Activated CD4-positive, alpha-beta memory T cell treated with anti-CD3 and anti-CD28 coated beads, Interleukin-2, amount 10 ng/mL, durations not matched to agents 7 days and 5 days (primary cell): ENCODE measurements at regions of chr12 and their contacts with region 1.

Region 1: GRCh38 chr12:76144245-76144549 is 59.7 kb upstream of the NAP1L1 start:
- DNase-seq: no peak
- H3K4me3 Mint-ChIP-seq: no peak overlapping the region
- H3K27ac Mint-ChIP-seq: no peak overlapping the region
- H3K4me1 Mint-ChIP-seq: peaks cover 22% of the 10 kb centered on the region
- H3K27me3 Mint-ChIP-seq: no peaks in the 10 kb centered on the region

Region 2: DNA sequence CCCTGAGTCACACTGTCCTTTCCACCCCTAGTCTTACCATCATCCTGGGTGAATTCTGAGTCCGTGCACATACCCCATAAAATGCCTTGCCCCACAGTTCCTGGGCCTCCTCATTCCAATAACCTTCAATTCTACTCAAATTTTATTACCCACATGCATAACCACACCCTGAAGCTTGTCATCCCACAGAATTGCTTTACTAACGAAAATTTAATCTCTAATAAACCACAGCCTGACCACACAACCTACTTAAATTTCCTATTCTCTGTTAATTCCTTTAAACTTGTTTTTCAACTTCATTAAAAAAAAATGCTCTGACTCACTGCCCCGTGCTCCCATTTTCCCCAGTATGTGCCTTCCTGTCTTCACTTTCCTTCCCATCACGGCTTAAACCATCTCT is 318.5 kb before region 1 on chr12:
- CTCF ChIA-PET with region 1: no interaction called
- POLR2A ChIA-PET with region 1: no interaction called
- DNase-seq: no peak
- H3K4me3 Mint-ChIP-seq: no peak overlapping the region
- H3K27ac Mint-ChIP-seq: no peak overlapping the region
- H3K4me1 Mint-ChIP-seq: peaks cover 3% of the 10 kb centered on the region
- H3K27me3 Mint-ChIP-seq: peaks cover 8% of the 10 kb centered on the region

Region 3: DNA sequence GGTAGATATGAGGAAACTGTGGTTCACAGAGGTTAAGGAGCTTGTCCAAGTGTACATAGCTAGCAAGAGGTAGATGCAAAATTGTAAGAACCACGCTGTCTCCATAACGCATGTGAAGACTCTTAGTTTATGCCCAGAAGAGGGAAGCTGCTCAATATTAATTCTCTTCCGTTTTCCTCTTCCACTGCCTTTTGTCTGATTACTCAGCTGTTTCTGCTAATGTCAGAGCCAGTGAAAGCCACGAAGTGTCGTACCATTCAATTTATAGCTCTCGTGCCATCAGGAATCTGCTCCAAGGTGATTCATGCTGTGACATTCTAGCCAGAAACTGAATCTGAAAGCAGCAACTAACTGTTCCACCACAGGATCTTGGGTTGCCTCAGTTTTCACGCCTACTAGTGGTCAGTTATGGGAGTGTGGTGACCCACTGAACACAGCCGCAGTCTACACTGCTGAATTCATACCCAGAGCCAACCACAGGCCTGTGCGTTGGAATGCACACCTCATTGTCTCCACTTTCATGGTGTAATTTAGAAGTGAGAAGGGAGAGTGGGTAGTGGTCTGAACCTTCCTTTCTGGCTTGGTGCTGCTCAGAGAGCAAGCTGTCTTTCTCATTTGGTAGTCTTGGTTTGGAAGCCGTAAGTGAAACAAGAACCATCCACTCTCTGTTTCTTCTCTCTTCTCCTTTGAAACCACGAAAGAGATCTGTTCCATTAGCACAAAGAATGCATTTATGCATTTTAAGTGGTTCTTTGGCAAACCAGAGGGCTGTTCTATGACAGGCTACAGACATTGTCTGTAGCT is 14.5 kb after region 1 on chr12:
- CTCF ChIA-PET with region 1: interaction called, 12 read pairs
- POLR2A ChIA-PET with region 1: interaction called, 8 read pairs
- DNase-seq: peak; percentile 77
- H3K4me3 Mint-ChIP-seq: peak overlapping the region; percentile 46
- H3K27ac Mint-ChIP-seq: no peak overlapping the region
- H3K4me1 Mint-ChIP-seq: peaks cover 15% of the 10 kb centered on the region
- H3K27me3 Mint-ChIP-seq: peaks cover 2% of the 10 kb centered on the region

Region 4: DNA sequence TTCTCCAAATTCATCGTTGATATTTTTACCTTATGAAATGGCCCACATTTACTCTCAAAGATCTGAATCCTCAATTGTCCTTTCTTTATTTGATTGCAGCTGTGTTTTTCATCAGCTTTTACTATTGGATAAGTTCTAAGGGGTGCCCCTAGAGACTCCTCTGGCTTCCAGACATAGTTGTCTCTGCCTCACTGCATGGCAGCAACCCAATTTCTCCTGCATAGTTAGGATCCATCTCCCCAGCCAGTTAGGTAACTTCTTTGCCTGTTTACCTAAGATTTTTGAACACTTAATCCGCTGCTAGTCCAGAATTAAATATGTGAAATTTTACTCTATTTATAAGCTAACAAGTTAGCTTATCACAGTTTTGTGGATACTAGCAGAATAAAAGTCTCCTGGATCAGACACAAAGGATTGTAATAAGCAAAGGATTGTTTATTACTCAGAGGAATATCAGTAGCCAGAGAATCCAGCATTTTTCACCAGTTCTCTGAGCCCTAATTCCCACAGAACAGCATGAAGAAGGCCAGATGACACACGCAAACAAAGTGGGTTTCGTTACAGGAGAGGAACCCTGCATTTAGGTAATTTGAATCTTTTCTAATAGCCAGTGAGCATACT is 102.9 kb after region 1 on chr12:
- CTCF ChIA-PET with region 1: no interaction called
- POLR2A ChIA-PET with region 1: no interaction called
- DNase-seq: no peak
- H3K4me3 Mint-ChIP-seq: no peak overlapping the region
- H3K27ac Mint-ChIP-seq: no peak overlapping the region
- H3K4me1 Mint-ChIP-seq: no peaks in the 10 kb centered on the region
- H3K27me3 Mint-ChIP-seq: peaks cover 19% of the 10 kb centered on the region

Region 5: DNA sequence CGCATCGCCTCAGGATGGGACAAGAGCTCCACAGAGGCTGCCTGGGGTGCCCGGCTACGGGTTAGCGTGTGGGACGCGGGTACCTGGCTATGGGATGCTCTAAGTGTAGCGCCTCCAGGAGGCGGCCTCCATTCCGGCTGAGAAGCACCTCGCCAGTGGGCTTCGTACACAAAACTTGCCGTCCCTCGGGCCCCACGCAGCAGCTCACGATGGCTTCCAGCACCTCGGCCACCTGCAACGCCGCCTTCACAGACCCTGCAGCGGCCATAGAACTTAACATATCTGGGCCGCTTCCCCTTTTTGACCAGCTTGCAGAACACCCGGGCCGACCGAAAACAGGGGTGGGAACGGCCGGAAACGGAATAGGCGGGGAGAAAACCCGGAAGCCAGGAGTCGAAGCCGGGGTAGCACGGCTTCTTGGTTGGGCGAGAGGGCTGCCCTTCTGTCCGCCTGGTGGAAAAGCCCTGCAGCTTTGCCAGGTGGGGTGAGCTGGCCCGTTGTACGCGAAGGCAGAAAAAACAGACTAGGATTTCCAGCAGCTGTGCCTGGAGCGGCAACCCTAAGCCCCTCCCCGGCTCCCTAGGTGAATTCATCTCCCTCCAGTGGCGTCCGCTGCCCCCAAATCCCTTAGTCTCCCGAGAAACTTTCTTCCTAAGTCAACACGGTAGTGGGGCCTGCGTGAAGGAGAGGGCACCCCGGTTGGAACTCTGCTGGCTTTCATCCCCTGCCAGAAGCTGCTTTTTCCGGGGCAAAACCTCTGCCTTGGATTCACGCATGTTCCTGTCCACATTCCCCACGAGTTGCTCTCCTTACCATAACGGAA is 204.1 kb after region 1 on chr12 and contains the start of gene BBS10:
- CTCF ChIA-PET with region 1: no interaction called
- POLR2A ChIA-PET with region 1: no interaction called
- DNase-seq: peak; percentile 89
- H3K4me3 Mint-ChIP-seq: peak within 1 kb of the TSS; percentile 96
- H3K27ac Mint-ChIP-seq: peak within 1 kb of the TSS; percentile 82
- H3K4me1 Mint-ChIP-seq: peaks cover 25% of the 10 kb centered on the region
- H3K27me3 Mint-ChIP-seq: no peaks in the 10 kb centered on the region
- total RNA-seq, gene BBS10: 4.4 to 5.0 TPM